Transverse colon (tissue), 4 donors: ENCODE measurements at regions of chr1 and their contacts with region 1.

Region 1: DNA sequence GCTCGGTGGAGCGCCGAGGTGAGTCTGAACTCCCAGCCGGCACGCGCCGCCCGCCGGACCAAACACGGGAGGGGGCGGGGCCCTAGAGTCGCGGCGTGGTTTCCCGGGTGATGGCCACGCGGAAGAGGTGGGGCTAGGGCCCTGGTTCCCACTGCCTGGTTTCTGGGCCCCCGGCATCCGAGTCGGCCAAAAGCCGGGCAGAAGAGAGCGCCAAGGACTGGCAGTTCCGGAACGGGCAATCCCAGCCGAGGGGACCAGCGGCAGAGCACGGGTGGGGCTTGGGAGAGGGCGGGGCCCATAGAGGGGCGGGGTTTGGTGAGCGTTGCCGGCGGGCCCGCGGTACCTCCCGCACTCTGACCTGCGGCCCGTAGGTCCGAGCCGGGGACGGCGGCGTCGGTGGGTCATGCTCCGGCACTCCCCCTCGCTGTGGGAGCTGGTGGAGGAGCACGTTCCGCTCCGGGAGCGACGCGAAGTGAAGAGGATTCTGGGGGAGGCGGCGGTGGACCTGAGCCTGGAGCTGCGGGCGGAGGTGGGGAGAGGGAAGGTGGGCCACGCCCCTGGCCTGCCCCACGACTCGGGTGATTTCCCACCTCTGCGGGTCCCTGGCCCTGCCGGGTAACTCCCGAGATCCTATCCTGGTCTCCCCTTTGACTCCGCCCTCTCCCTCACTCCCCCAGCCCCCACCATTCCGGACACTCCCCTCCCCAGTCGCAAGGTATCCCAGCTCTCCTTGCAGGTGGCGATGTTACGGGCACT is at the start of gene CCDC24:
- DNase-seq: peak; percentile 90
- H3K4me3 ChIP-seq: peak within 1 kb of the TSS; percentile 31 to 64 (median 58)
- H3K27ac ChIP-seq: peak within 1 kb of the TSS; percentile 83 to 88 (median 87)
- H3K4me1 ChIP-seq: peaks cover 5 to 32% (median 21%) of the 10 kb centered on the region in 4 donors
- H3K27me3 ChIP-seq: no peaks in the 10 kb centered on the region
- CTCF ChIP-seq: peak in 1 of 5 experiments; percentile 12
- EP300 ChIP-seq: no peak
- POLR2A ChIP-seq: peak; percentile 67
- total RNA-seq, gene CCDC24: 13.8 to 22.0 (median 17.6) TPM

Region 2: DNA sequence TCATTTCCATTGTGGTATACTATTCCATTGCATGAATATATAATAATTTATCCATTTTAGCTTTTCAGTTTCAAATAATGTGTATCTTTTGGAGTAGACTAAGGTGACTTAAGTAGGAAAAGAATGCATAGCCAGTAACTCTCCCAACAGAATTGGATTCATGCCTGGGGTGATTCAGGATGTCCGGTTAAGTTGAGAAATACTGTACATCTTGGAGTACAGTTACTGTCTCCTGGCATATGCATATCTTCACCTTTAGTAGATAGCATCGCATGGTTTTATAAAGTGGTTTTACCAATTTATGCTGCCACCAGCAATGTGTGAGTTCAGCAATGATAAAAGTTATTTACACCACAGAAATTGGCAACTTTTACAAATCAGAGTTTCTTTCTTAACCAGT is 58.2 kb after region 1 on chr1:
- in situ Hi-C with region 1: loop called in 1 of 4 experiments (anchors 10 kb)
- intact Hi-C with region 1: no loop called
- DNase-seq: no peak
- H3K4me3 ChIP-seq: no peak overlapping the region
- H3K27ac ChIP-seq: peak overlapping the region in 1 of 4 donors; percentile 35
- H3K4me1 ChIP-seq: peaks cover 0 to 8% (median 5%) of the 10 kb centered on the region in 4 donors
- H3K27me3 ChIP-seq: no peaks in the 10 kb centered on the region
- CTCF ChIP-seq: no peak
- EP300 ChIP-seq: no peak
- POLR2A ChIP-seq: no peak